Natural killer cell (primary cell): ENCODE measurements at regions of chr1 and their contacts with region 1.

Region 1: DNA sequence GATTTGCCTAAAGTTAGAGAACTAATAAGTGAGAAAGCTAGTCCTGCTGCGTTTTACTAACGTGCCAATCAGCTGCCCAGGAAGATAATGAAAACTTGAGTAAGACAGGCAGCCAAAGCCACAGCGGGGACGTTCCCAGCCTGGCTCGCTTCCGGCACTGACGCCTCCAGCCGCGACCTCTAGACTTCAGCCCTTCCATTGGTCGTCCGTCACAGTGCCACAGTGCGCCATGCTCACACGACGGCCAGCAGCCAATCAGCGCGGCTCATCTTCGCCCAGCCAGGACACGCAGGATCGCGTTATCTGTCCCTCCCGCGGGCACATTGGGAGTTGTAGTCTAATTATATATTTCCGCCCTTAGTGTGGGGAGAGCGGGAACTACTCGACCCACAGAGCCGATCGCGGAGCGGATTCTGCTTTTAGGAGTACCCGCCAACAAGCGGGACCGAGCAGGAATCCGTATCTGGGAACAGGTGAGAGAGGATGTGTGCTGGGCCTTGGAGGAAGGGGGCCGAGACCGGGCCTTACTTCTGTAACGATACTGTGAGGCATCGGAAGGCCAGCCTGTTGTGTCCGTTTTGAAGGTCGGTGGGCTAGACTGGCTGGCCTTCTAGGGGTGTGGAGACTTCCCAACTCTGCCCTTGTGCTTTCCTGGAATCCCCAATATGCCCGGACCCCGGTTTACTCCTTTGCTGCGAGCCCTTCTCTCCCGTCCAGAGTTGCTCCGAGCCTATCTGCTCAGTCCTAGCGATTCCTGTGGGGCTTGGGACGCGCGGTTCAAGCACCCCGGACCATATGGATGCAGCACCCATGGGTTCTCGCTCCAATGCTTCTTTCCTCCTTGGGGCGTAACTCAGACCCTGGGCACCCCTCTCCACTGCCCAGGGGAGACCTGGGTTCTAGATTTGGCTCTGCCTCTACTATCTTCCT is at the start of gene FDPS:
- DNase-seq: peak; percentile 93 to 99
- ATAC-seq: peak; percentile 94 to 99 (median 96)
- H3K4me3 ChIP-seq: peak within 1 kb of the TSS; percentile 67
- H3K4me3 Mint-ChIP-seq: peak within 1 kb of the TSS; percentile 97
- H3K27ac ChIP-seq: peak within 1 kb of the TSS; percentile 94
- H3K27ac Mint-ChIP-seq: peak within 1 kb of the TSS; percentile 97 to 98
- H3K4me1 ChIP-seq: peaks cover 27% of the 10 kb centered on the region
- H3K4me1 Mint-ChIP-seq: peaks cover 20 to 28% of the 10 kb centered on the region in 2 donors
- H3K27me3 ChIP-seq: no peaks in the 10 kb centered on the region
- H3K27me3 Mint-ChIP-seq: no peaks in the 10 kb centered on the region
- CTCF ChIP-seq: no peak
- total RNA-seq, gene FDPS: 105 to 110 (median 105) TPM

Region 2: DNA sequence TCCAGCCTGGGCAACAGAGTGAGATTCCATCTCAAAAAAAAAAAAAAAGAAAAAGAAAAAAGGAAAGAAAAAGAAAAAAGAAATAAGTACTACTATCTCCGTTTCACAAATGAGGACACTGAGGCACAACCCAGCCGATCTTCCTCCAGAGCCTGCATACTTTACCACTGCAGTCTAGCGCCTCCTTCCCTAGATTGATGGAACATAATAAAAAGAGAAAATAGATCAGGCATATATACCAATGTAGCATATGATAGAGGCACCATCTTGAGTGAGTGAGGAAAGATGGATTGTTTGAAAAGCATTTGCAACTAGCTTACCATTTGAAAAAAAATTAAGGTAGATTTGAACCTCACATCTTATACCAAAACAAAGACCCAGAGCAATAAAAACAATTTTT is 163.3 kb before region 1 on chr1:
- intact Hi-C with region 1: no loop called
- DNase-seq: no peak
- ATAC-seq: no peak
- H3K4me3 ChIP-seq: no peak overlapping the region
- H3K4me3 Mint-ChIP-seq: no peak overlapping the region
- H3K27ac ChIP-seq: no peak overlapping the region
- H3K27ac Mint-ChIP-seq: no peak overlapping the region
- H3K4me1 ChIP-seq: peaks cover 2% of the 10 kb centered on the region
- H3K4me1 Mint-ChIP-seq: peaks cover 0 to 2% of the 10 kb centered on the region in 2 donors
- H3K27me3 ChIP-seq: no peaks in the 10 kb centered on the region
- H3K27me3 Mint-ChIP-seq: peaks cover 12 to 25% of the 10 kb centered on the region in 2 donors
- CTCF ChIP-seq: no peak

Region 3: GRCh38 chr1:155244368-155245162 is 64.2 kb before region 1 on chr1:
- intact Hi-C with region 1: loop called (anchors 1 kb)
- DNase-seq: peak; percentile 88 to 96
- ATAC-seq: peak; percentile 92 to 97 (median 96)
- H3K4me3 ChIP-seq: peak overlapping the region; percentile 74
- H3K4me3 Mint-ChIP-seq: peak overlapping the region; percentile 90
- H3K27ac ChIP-seq: peak overlapping the region; percentile 78
- H3K27ac Mint-ChIP-seq: peak overlapping the region; percentile 94 to 95
- H3K4me1 ChIP-seq: peaks cover 44% of the 10 kb centered on the region
- H3K4me1 Mint-ChIP-seq: peaks cover 21 to 37% of the 10 kb centered on the region in 2 donors
- H3K27me3 ChIP-seq: no peaks in the 10 kb centered on the region
- H3K27me3 Mint-ChIP-seq: peaks cover 4 to 8% of the 10 kb centered on the region in 2 donors
- CTCF ChIP-seq: peak; percentile 20

Region 4: GRCh38 chr1:155261852-155262673 is 46.7 kb before region 1 on chr1 and contains the start of gene SCAMP3:
- intact Hi-C with region 1: loop called (anchors 1 kb)
- DNase-seq: peak; percentile 78 to 94
- ATAC-seq: peak; percentile 96 to 99 (median 99)
- H3K4me3 ChIP-seq: peak within 1 kb of the TSS; percentile 84
- H3K4me3 Mint-ChIP-seq: peak within 1 kb of the TSS; percentile 99
- H3K27ac ChIP-seq: peak within 1 kb of the TSS; percentile 64
- H3K27ac Mint-ChIP-seq: peak within 1 kb of the TSS; percentile 91 to 98
- H3K4me1 ChIP-seq: peaks cover 20% of the 10 kb centered on the region
- H3K4me1 Mint-ChIP-seq: peaks cover 32 to 34% of the 10 kb centered on the region in 2 donors
- H3K27me3 ChIP-seq: no peaks in the 10 kb centered on the region
- H3K27me3 Mint-ChIP-seq: no peaks in the 10 kb centered on the region
- CTCF ChIP-seq: no peak
- total RNA-seq, gene SCAMP3: 59.7 to 72.1 (median 65.0) TPM

Region 5: GRCh38 chr1:155273343-155274245 is 35.2 kb before region 1 on chr1 and contains the start of gene CLK2:
- intact Hi-C with region 1: loop called (anchors 2 kb)
- DNase-seq: peak; percentile 91 to 96
- ATAC-seq: peak; percentile 87 to 96 (median 89)
- H3K4me3 ChIP-seq: peak within 1 kb of the TSS; percentile 53
- H3K4me3 Mint-ChIP-seq: peak within 1 kb of the TSS; percentile 92
- H3K27ac ChIP-seq: peak within 1 kb of the TSS; percentile 71
- H3K27ac Mint-ChIP-seq: peak within 1 kb of the TSS; percentile 85 to 98
- H3K4me1 ChIP-seq: peaks cover 39% of the 10 kb centered on the region
- H3K4me1 Mint-ChIP-seq: peaks cover 46 to 48% of the 10 kb centered on the region in 2 donors
- H3K27me3 ChIP-seq: no peaks in the 10 kb centered on the region
- H3K27me3 Mint-ChIP-seq: no peaks in the 10 kb centered on the region
- CTCF ChIP-seq: no peak
- total RNA-seq, gene CLK2: 70.4 to 97.5 (median 84.4) TPM